Activated CD4-positive, alpha-beta memory T cell treated with anti-CD3 and anti-CD28 coated beads for 36 hours (primary cell): ENCODE measurements at regions of chr21 and their contacts with region 1.

Region 1: GRCh38 chr21:28771790-28772501 is 220.7 kb downstream of the LTN1 start:
- DNase-seq: no peak
- H3K4me3 Mint-ChIP-seq: peak overlapping the region; percentile 23
- H3K27ac Mint-ChIP-seq: peak overlapping the region; percentile 18
- H3K4me1 Mint-ChIP-seq: peaks cover 66% of the 10 kb centered on the region
- H3K27me3 Mint-ChIP-seq: no peaks in the 10 kb centered on the region

Region 2: DNA sequence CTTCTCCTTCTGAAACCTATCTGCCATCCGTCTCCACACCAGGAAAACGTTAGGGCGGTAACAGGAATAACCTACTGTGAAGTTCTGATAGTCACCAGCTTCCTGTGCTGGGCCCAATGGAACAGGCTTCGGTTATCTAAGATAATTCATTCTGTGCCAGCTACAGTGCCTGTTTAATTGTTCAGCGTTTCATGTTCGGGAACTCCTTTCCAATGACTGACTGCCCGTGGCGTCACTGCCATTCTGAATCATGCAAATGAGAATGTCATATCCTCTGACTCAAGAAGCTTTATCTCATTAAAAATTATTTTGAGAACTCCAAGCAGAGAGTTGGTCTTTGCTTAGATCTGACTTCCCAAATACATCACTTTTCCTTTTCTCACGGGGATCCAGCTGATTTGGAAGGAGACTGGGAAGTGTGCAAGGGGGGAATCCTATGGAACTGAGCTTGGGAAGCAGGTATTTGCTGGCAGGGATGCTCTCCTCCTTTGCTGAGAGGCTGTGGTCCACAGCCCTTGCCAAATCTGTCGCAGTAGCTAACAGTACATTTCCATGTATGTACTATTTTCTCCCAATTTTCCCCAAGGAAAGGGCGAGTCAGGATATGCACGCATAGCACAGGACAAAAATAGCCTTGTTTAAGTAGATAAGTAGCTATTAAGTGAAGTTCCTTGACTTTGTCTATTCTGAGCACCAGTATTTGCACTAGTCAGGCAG is 137.9 kb before region 1 on chr21:
- CTCF ChIA-PET with region 1: no interaction called
- POLR2A ChIA-PET with region 1: no interaction called
- intact Hi-C with region 1: loop called (anchors 1 kb)
- DNase-seq: peak; percentile 33
- H3K4me3 Mint-ChIP-seq: no peak overlapping the region
- H3K27ac Mint-ChIP-seq: no peak overlapping the region
- H3K4me1 Mint-ChIP-seq: peaks cover 20% of the 10 kb centered on the region
- H3K27me3 Mint-ChIP-seq: no peaks in the 10 kb centered on the region

Region 3: DNA sequence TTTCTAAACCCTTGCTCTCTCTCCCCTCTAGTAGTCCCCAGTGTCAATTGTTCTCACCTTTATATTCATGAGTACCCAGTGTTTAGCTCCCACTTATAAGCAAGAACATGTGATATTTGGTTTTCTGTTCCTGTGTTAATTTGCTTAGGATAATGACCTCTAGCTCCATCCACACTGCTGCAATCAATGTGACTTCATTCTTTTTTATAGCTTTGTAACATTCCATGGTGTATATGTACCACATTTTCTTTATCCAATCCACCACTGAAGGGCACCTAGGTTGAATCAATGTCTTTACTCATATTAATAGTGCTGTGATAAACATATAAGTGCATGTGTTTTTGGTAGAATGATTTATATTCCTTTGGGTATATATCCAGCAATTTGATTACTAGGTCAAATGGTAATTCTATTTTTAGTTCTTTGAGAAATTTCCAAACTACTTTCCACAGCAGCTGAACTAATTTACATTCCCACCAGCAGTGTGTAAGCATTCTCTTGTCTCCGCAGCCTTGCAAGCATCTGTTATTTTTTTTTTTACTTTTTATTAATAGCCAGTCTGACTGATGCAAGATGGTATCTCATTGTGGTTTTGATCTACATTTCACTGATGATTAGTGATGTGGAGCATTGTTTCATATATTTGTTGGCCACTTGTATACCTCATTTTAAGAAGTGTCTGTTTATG is 57.0 kb before region 1 on chr21:
- CTCF ChIA-PET with region 1: no interaction called
- POLR2A ChIA-PET with region 1: no interaction called
- intact Hi-C with region 1: no loop called
- DNase-seq: no peak
- H3K4me3 Mint-ChIP-seq: no peak overlapping the region
- H3K27ac Mint-ChIP-seq: no peak overlapping the region
- H3K4me1 Mint-ChIP-seq: no peaks in the 10 kb centered on the region
- H3K27me3 Mint-ChIP-seq: no peaks in the 10 kb centered on the region

Region 4: DNA sequence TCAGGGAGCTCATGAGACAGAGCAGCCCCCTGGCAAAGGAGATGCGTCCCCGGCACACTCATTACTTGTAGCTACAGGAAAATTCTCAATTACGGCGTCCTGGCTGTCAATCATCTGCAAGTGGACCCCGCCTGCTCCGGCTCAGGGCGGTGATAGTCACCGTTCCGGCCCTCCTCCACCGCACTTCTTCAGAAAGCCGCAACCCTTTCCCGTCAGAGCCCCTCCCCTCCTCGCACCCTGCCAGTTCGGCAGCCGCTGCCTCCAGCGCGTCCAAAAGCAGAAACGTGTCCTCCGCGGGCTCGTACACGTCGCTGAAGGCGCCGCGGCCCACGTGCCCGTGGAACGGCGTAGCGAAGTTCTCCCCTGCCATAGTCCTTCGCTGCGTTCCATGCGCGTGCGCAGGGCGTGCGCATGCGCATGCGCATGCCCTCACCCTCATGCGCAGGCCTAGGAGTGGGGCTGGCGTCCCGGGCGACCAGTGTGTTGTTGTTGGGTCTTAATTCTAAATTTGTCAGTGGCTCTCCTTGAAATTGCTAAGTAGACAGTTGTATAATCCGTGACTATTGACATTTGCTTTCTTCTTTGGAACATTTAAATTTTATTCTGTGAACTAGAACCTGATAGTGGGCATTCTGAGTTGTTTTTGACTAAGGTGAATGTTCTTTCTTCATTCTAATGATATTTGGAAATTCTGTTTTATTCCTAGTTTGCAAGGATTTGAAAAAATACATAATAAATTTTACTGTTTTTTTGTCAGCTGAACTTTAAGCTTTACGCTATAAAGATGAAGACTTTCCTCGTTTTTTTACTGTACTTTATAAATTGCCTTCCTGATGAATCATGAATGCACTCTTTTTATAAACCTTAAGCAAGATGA is 113.3 kb after region 1 on chr21:
- CTCF ChIA-PET with region 1: no interaction called
- POLR2A ChIA-PET with region 1: no interaction called
- intact Hi-C with region 1: loop called (anchors 1 kb)
- DNase-seq: peak; percentile 95
- H3K4me3 Mint-ChIP-seq: peak overlapping the region; percentile 89
- H3K27ac Mint-ChIP-seq: peak overlapping the region; percentile 99
- H3K4me1 Mint-ChIP-seq: peaks cover 14% of the 10 kb centered on the region
- H3K27me3 Mint-ChIP-seq: peaks cover 4% of the 10 kb centered on the region

Region 5: DNA sequence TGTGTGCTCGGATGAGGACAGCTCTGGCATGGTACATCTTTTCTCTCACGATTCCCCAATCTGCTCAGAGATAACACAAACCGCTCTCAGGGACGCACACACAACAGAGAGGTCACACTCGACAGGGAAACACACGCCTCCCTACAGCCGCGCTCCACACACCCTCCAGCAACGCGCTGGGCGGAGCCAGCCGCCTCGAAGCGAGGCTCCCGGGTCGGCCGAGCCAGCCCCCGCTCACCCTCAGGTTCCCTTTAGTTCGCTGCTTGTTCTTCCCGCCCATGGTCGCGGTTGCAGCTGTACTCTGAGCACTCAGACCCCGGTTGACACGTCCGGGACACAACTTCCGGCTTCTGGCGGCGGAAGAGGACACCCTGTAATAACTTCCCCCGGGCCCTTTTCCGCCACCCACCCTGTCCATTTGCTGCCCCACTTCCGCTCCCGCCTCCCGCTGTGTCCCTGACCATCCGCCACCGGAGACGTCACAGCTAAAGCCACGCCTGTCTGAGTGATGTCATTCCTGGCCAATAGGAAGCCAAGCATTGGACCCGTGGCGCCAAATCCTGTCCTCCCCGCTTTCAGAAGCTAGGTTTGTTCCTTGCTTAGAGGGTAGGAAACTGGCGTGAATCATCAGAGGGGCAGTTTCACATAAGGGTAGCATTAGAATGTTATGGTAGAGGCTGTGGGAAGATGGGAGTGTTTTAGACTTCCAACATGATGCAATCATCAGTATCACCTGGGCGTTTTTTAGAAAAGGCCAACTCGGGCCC is 220.8 kb after region 1 on chr21 and contains the start of gene LTN1:
- CTCF ChIA-PET with region 1: no interaction called
- POLR2A ChIA-PET with region 1: no interaction called
- intact Hi-C with region 1: loop called (anchors 2 kb)
- DNase-seq: peak; percentile 100
- H3K4me3 Mint-ChIP-seq: peak within 1 kb of the TSS; percentile 93
- H3K27ac Mint-ChIP-seq: peak within 1 kb of the TSS; percentile 95
- H3K4me1 Mint-ChIP-seq: peaks cover 48% of the 10 kb centered on the region
- H3K27me3 Mint-ChIP-seq: no peaks in the 10 kb centered on the region
- total RNA-seq, gene LTN1: 26.7 to 29.1 TPM

Region 6: DNA sequence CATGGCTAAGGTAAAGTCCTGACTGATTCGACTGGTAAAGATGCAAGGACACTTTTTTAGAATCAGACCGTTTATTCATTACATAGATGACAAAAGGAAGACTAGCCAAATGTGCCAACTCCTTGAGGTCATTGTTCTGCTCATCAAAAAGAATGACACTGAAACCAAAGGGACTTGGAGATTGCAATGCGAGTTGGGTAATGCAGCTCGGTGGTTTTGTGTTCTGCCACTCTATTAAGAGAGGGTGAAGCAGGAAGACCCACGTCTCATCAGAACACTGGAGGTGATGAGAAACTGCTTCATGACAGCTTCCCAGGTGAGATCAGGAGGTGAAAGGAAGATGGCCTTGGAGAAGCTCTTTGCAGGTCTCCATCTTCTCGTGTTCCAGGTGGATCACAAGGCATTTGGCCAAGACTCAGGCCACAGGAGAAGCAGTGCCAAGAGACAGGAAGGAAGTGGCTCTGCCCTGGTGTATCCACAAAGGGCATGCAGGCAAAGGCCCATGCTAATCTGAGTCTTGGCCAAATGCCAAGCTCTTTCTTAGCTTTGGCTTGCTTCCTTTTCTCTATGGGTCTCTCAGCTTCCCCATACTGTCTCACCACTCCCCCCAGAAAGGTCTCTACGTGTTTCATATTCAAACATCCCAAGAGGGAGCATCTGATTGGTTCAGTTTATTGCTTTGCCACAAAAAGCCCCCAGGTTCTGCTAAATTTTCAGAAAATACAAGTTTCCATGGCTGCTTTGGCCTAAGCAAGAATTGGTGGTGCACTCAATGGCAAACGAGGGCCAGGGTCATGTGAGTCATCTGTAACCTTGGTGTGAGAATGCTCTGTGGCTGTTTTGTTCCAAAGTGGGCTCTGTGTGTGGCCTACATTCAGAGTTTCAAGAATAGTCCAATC is 307.2 kb after region 1 on chr21:
- CTCF ChIA-PET with region 1: no interaction called
- POLR2A ChIA-PET with region 1: no interaction called
- intact Hi-C with region 1: loop called (anchors 5 kb)
- DNase-seq: peak; percentile 66
- H3K4me3 Mint-ChIP-seq: peak overlapping the region; percentile 84
- H3K27ac Mint-ChIP-seq: peak overlapping the region; percentile 81
- H3K4me1 Mint-ChIP-seq: peaks cover 58% of the 10 kb centered on the region
- H3K27me3 Mint-ChIP-seq: no peaks in the 10 kb centered on the region